Tibial artery (tissue), 4 donors: ENCODE measurements at regions of chr6 and their contacts with region 1.

Region 1: GRCh38 chr6:110815217-110816109 is at the start of gene CDK19:
- DNase-seq: peak; percentile 99
- H3K4me3 ChIP-seq: peak within 1 kb of the TSS; percentile 74 to 75
- H3K27ac ChIP-seq: peak within 1 kb of the TSS; percentile 92 to 97
- H3K4me1 ChIP-seq: peaks cover 0 to 19% (median 15%) of the 10 kb centered on the region in 4 donors
- H3K27me3 ChIP-seq: no peaks in the 10 kb centered on the region
- CTCF ChIP-seq: no peak

Region 2: DNA sequence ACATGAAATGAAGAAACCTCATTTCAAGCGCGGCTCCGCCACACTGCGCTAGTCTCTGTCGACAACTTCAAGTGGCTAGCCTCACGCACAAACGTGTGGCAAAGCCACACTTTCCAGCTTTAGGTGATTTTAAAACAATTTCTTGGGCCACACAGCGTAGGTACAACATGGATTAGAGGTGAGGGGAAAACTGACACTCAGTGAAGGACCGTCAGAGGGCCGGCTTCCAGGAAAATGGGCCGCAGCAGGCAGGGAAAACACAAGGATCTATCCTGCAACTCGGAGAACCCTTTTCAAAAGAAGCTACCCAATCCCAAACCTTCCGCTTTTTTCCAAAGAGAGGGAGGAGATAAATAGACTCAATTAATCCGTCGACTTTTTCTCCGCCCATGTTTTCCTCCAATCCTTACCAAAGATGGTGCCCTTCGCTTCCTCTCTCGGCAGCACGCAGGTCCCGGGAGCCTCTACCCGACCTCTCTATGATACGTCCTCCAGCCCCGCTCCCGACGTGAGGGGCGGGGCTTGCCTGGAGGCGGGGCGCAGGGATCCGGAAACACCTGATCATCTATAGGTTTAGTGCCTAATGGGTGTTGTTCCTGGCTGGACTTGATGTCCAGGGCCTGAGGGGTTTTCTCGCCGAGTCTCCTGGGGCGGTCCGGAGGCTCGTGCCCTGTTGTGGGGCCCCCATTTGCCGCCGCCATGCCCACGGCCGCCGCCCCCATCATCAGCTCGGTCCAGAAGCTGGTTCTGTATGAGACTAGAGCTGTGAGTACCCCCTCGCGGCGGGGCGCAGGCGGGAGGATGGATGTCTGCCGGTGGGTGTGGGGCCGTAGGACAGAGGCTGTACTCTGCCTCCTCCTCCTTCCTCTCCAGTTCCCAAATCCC is 1124.5 kb before region 1 on chr6 and contains the starts of genes AK9 and FIG4:
- intact Hi-C with region 1: loop called (anchors 10 kb)
- DNase-seq: peak; percentile 96 to 97
- H3K4me3 ChIP-seq: peak within 1 kb of the TSS; percentile 72 to 82
- H3K27ac ChIP-seq: peak within 1 kb of the TSS; percentile 88 to 93
- H3K4me1 ChIP-seq: peaks cover 0 to 30% (median 19%) of the 10 kb centered on the region in 4 donors
- H3K27me3 ChIP-seq: no peaks in the 10 kb centered on the region
- CTCF ChIP-seq: peak in 1 of 2 experiments; percentile 26

Region 3: GRCh38 chr6:110101885-110102284 is 713.6 kb before region 1 on chr6:
- intact Hi-C with region 1: no loop called
- DNase-seq: no peak
- H3K4me3 ChIP-seq: no peak overlapping the region
- H3K27ac ChIP-seq: no peak overlapping the region
- H3K4me1 ChIP-seq: peaks cover 0 to 25% (median 6%) of the 10 kb centered on the region in 4 donors
- H3K27me3 ChIP-seq: no peaks in the 10 kb centered on the region
- CTCF ChIP-seq: no peak

Region 4: DNA sequence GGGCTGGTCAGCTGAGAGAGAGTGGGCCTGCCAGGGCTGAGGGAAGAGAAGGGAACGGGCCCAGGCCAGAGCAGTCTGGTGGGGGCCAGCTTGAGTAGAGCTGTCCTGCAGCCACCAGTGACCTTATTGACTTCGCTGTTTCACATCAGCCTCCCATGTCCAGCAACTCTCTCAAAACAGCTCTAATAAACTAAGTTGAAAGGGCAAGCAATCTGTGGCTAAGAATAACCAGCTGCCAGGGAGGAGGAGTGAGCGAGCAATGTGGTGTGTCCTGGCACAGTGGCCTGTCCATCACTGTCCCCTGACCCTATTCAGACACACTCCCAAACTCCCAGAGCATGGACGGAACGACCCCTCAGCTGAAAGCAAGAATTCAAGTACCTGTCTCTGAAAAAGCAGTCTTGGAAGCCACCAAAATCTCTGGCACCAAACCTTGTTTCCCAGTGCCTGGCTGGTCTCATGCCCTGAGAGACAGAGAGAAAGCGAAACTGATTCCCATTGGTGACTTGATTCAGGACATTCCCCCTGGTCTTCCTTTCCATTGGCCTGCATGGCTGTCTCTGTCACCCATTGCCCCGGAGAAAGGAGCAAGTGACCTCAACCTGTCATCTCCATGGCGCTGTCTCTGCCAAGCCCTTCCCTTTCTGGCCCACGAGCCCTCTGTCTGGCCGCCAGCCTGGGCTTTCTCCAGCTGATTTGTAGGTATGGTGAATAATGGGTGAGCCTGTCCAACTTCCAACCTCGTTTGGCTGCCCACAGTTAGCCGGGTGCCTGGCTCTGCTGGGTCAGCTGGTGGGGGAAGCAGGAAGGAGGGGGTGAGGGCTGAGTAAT is 400.2 kb before region 1 on chr6 and contains the start of gene DDO:
- intact Hi-C with region 1: no loop called
- DNase-seq: peak; percentile 77 to 93
- H3K4me3 ChIP-seq: peak within 1 kb of the TSS; percentile 46 to 50
- H3K27ac ChIP-seq: peak within 1 kb of the TSS; percentile 75 to 79
- H3K4me1 ChIP-seq: peaks cover 0 to 21% (median 17%) of the 10 kb centered on the region in 4 donors
- H3K27me3 ChIP-seq: no peaks in the 10 kb centered on the region
- CTCF ChIP-seq: no peak

Region 5: DNA sequence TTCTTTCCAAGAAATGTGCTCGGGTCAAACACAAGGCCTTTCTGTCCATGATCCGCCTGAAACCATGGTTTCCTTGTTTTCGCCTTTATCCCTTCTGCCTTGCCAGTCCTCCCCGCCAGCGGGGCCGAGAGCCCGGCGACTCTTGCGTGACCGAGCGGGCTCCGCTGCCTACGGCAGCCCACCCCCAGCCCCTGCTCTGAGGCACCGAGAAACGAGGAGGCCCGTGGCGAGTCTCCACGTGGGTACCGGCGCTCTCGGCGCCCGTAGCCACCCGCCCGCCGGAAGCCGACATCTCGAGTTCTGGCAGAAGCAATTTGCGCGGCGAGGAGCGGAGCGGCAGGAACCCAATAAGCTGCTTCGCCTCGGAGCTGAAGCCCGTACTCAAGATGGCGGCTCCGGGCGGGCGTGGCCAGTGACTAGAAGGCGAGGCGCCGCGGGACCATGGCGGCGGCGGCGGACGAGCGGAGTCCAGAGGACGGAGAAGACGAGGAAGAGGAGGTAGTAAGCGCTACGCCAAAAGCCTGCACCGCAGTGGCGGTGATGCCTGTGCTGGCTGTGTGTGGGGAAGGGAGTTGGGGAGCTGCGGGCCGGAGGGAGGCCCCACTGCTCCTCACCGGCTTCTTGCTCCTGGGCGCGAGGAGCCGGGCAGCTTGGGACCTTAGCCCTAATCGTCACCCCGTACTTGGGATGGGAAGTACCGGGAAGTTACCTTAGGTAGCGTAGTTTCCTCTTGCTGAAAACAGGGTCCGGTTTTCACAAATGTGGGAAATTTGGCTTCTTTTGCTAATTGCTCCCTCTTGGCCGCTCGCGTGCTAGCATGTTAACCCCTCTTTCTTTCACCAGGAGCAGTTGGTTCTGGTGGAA is 143.1 kb after region 1 on chr6 and contains the start of gene GTF3C6:
- intact Hi-C with region 1: loop called (anchors 5 kb)
- DNase-seq: peak; percentile 96
- H3K4me3 ChIP-seq: peak within 1 kb of the TSS; percentile 83 to 96
- H3K27ac ChIP-seq: peak within 1 kb of the TSS; percentile 91 to 93
- H3K4me1 ChIP-seq: peaks cover 0 to 13% (median 12%) of the 10 kb centered on the region in 4 donors
- H3K27me3 ChIP-seq: no peaks in the 10 kb centered on the region
- CTCF ChIP-seq: no peak

Region 6: GRCh38 chr6:110981202-110981600 is 165.7 kb after region 1 on chr6:
- intact Hi-C with region 1: loop called (anchors 5 kb)
- DNase-seq: no peak
- H3K4me3 ChIP-seq: peak overlapping the region; percentile 66 to 97
- H3K27ac ChIP-seq: peak overlapping the region; percentile 81 to 94
- H3K4me1 ChIP-seq: peaks cover 0 to 15% (median 8%) of the 10 kb centered on the region in 4 donors
- H3K27me3 ChIP-seq: no peaks in the 10 kb centered on the region
- CTCF ChIP-seq: no peak